ENCODE measurements at regions of chr11 and their contacts with region 1.

Region 1: GRCh38 chr11:15074206-15075161 is 1.1 kb downstream of the CALCB start:
- DNase-seq: peak; percentile 63
- CTCF ChIP-seq: peak; percentile 94

Region 2: DNA sequence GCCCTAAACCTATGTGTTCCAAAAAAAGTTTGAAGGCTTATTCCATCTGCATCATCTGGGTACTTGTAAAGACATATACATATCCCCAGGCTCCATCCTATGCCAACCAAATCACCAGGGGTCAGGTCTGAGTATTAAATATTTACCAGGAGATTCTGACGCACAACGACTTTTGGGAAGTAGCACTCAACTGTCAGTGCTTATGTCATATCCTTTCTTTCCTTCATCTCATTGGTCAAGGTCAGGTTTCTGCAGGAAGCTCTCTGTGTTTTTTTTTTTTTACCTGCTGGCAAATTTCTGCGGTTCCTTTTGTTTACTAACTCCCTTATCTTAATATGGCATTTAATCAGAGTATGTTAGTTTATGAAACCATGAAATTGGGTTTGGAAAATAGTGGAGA is 159.9 kb before region 1 on chr11:
- CTCF ChIA-PET with region 1: interaction called, 153 read pairs
- POLR2A ChIA-PET with region 1: no interaction called
- DNase-seq: no peak
- CTCF ChIP-seq: no peak

Region 3: DNA sequence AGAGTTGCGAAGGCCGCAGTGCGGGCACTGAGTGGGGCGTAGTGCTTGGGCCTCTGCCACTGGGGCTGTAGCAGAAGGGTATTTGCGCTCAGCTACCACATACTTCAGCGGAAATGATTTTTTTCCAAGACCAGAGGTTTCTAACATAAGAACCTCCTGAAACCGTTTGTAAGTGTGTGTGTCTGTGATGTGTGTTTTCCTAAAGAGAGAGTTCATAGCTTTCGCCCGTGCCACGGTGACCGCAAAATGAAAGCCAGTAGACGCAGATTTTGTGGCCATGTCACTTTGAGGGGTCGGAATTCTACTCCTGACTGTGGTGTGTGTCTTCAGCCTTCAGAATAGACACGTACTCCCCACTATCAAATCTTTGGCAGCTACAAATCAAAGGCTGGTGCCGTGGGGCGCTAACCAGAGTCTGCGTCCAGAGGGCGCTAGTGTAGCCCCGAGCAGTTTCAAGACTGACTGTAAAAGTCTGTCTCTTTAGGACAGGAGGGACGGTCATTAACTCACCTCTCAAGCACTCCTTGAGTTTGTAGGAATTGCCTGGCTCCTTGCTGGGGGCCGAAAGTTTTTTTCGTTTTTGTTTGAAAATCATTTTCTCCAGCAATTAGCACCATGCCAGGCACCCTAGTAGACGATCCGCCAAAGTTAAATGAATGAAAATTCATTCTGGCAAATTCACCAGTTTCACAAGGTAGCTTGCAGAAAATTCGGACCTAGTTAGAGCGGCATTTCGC is 99.8 kb before region 1 on chr11:
- CTCF ChIA-PET with region 1: interaction called, 21 read pairs
- POLR2A ChIA-PET with region 1: no interaction called
- DNase-seq: peak; percentile 40
- CTCF ChIP-seq: peak; percentile 60

Region 4: GRCh38 chr11:15093432-15093831 is 18.9 kb after region 1 on chr11:
- CTCF ChIA-PET with region 1: interaction called, 47 read pairs
- POLR2A ChIA-PET with region 1: no interaction called
- DNase-seq: no peak
- CTCF ChIP-seq: no peak

Region 5: GRCh38 chr11:15169815-15170551 is 95.5 kb after region 1 on chr11:
- CTCF ChIA-PET with region 1: no interaction called
- POLR2A ChIA-PET with region 1: no interaction called
- DNase-seq: no peak
- CTCF ChIP-seq: no peak